H1 (cell line): ENCODE measurements at regions of chr2 and their contacts with region 1.

Region 1: GRCh38 chr2:71100195-71100964 is 29.6 kb downstream of the MCEE start:
- DNase-seq: peak; percentile 34 to 84
- H3K4me3 ChIP-seq: no peak overlapping the region
- H3K27ac ChIP-seq: no peak overlapping the region
- H3K4me1 ChIP-seq: peaks cover 0 to 7% (median 5%) of the 10 kb centered on the region in 4 experiments; a peak in 4 of 7 replicates
- H3K27me3 ChIP-seq: no peaks in the 10 kb centered on the region
- CTCF ChIP-seq: peak; percentile 71 to 81 (median 74)
- EP300 ChIP-seq: no peak
- POLR2A ChIP-seq: no peak
- RAD21 ChIP-seq: peak; percentile 65 to 70

Region 2: DNA sequence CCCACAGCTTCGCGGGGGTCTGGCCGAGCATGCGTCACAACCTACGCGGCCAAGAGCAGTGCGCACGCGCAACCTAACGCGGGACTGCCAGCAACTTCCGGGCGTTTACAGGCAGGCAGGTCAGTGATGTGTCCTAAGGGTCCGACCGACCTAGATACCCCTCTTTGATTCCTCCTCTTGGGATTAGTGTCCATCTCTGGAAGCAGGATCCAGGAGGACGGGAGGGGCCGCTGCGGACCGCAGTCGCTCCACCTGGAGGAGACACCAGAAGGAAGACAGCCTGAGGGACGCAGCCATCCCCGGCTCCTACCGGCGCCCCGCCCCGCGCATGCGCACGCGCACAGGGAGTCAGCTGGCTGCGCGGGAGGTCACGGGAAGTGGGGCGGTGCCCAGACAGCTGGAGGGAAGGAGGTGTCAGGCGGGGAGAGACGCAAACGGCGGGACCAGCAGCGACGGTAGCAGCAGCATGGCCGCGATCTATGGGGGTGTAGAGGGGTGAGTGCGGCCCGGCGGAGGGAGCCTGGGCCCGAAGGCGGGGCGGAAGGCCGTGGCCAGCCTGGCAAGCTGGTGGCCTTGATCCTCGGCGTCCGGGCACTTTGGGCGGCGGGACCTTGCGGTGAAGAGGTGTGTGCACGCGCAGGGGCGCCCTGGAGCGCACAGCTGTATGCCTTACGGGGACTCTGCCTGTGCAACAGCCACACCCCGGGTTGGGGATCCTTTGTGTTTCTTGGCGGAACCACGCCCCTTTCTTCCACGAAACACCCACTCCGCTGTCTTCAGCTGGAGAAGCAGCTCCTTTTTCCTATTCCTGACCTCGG is 32.0 kb before region 1 on chr2 and contains the start of gene NAGK:
- CTCF ChIA-PET with region 1: interaction called, 100 read pairs
- POLR2A ChIA-PET with region 1: interaction called, 4 read pairs
- DNase-seq: peak; percentile 86 to 98
- H3K4me3 ChIP-seq: peak within 1 kb of the TSS; percentile 60 to 96 (median 82)
- H3K27ac ChIP-seq: peak within 1 kb of the TSS; percentile 78
- H3K4me1 ChIP-seq: peaks cover 0 to 6% (median 1%) of the 10 kb centered on the region in 4 experiments; a peak in 4 of 7 replicates
- H3K27me3 ChIP-seq: no peaks in the 10 kb centered on the region
- CTCF ChIP-seq: no peak
- EP300 ChIP-seq: peak in 1 of 2 experiments; percentile 3; a peak in 1 of 3 replicates
- POLR2A ChIP-seq: peak; percentile 85 to 98
- RAD21 ChIP-seq: no peak
- total RNA-seq, gene NAGK: 59.9 and 62.2 TPM in 2 replicates

Region 3: DNA sequence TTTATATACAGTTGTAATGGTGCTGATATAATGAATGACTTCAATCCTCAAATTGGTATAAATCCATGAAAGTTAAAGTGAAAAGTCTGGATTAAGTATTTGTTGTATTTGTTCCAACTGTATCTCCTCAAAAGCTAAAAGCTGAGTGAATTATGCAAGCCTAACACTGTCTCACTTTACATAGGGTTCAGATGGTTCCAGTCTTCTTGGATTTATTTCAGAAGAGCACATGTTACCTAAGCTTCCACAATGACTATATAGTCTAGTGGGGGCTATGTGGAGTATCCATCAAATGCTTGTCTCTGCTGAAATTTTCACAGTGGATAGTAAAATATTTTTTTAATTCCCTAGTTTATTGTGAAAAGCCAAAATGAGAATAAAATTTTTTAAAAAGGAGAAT is 16.7 kb after region 1 on chr2:
- CTCF ChIA-PET with region 1: interaction called, 24 read pairs
- POLR2A ChIA-PET with region 1: interaction called, 6 read pairs
- DNase-seq: no peak
- H3K4me3 ChIP-seq: no peak overlapping the region
- H3K27ac ChIP-seq: no peak overlapping the region
- H3K4me1 ChIP-seq: no peaks in the 10 kb centered on the region; a peak in 1 of 7 replicates
- H3K27me3 ChIP-seq: no peaks in the 10 kb centered on the region
- CTCF ChIP-seq: no peak
- EP300 ChIP-seq: no peak
- POLR2A ChIP-seq: no peak
- RAD21 ChIP-seq: no peak

Region 4: GRCh38 chr2:71130113-71130904 is 29.9 kb after region 1 on chr2 and contains the starts of genes MCEE and MPHOSPH10:
- CTCF ChIA-PET with region 1: interaction called, 28 read pairs
- POLR2A ChIA-PET with region 1: interaction called, 9 read pairs
- DNase-seq: peak; percentile 83 to 94
- H3K4me3 ChIP-seq: peak within 1 kb of the TSS; percentile 83 to 98 (median 92)
- H3K27ac ChIP-seq: peak within 1 kb of the TSS; percentile 80
- H3K4me1 ChIP-seq: no peaks in the 10 kb centered on the region
- H3K27me3 ChIP-seq: no peaks in the 10 kb centered on the region
- CTCF ChIP-seq: peak in 1 of 3 experiments; percentile 0; a peak in 1 of 4 replicates
- EP300 ChIP-seq: no peak
- POLR2A ChIP-seq: peak; percentile 79 to 88
- RAD21 ChIP-seq: peak in 1 of 2 experiments; percentile 9; a peak in 2 of 4 replicates
- total RNA-seq, gene MCEE: 14.1 and 15.5 TPM in 2 replicates
- total RNA-seq, gene MPHOSPH10: 39.1 and 42.8 TPM in 2 replicates

Region 5: GRCh38 chr2:71150082-71150816 is 49.9 kb after region 1 on chr2:
- CTCF ChIA-PET with region 1: interaction called, 21 read pairs
- POLR2A ChIA-PET with region 1: no interaction called
- DNase-seq: no peak
- H3K4me3 ChIP-seq: no peak overlapping the region
- H3K27ac ChIP-seq: no peak overlapping the region
- H3K4me1 ChIP-seq: no peaks in the 10 kb centered on the region
- H3K27me3 ChIP-seq: no peaks in the 10 kb centered on the region; a peak in 1 of 7 replicates
- CTCF ChIP-seq: peak in 1 of 3 experiments; percentile 29; a peak in 1 of 4 replicates
- EP300 ChIP-seq: no peak
- POLR2A ChIP-seq: no peak
- RAD21 ChIP-seq: no peak